CD8-positive, alpha-beta T cell (primary cell): ENCODE measurements at regions of chr11 and their contacts with region 1.

Region 1: GRCh38 chr11:24496736-24497725 is at the start of gene LUZP2:
- DNase-seq: no peak
- ATAC-seq: no peak
- H3K4me3 ChIP-seq: no peak within 1 kb of the TSS
- H3K4me3 Mint-ChIP-seq: no peak within 1 kb of the TSS
- H3K27ac ChIP-seq: no peak within 1 kb of the TSS
- H3K27ac Mint-ChIP-seq: no peak within 1 kb of the TSS
- H3K4me1 ChIP-seq: no peaks in the 10 kb centered on the region
- H3K4me1 Mint-ChIP-seq: no peaks in the 10 kb centered on the region
- H3K27me3 ChIP-seq: no peaks in the 10 kb centered on the region
- H3K27me3 Mint-ChIP-seq: peaks cover 11% of the 10 kb centered on the region
- CTCF ChIP-seq: no peak
- total RNA-seq, gene LUZP2: not detected

Region 2: GRCh38 chr11:24437123-24437522 is 59.9 kb before region 1 on chr11:
- CTCF ChIA-PET with region 1: no interaction called
- POLR2A ChIA-PET with region 1: no interaction called
- intact Hi-C with region 1: loop called in 1 of 2 experiments (anchors 5 kb)
- DNase-seq: no peak
- ATAC-seq: no peak
- H3K4me3 ChIP-seq: no peak overlapping the region
- H3K4me3 Mint-ChIP-seq: no peak overlapping the region
- H3K27ac ChIP-seq: no peak overlapping the region
- H3K27ac Mint-ChIP-seq: no peak overlapping the region
- H3K4me1 ChIP-seq: no peaks in the 10 kb centered on the region
- H3K4me1 Mint-ChIP-seq: no peaks in the 10 kb centered on the region
- H3K27me3 ChIP-seq: no peaks in the 10 kb centered on the region
- H3K27me3 Mint-ChIP-seq: no peaks in the 10 kb centered on the region
- CTCF ChIP-seq: no peak